Thyroid gland (tissue), 4 donors: ENCODE measurements at regions of chr3 and their contacts with region 1.

Region 1: GRCh38 chr3:141279077-141279967 is 47.7 kb downstream of the PXYLP1 start:
- DNase-seq: peak in 1 of 2 donors; percentile 19
- H3K4me3 ChIP-seq: no peak overlapping the region
- H3K27ac ChIP-seq: no peak overlapping the region
- H3K4me1 ChIP-seq: peaks cover 0 to 4% of the 10 kb centered on the region in 2 donors
- H3K27me3 ChIP-seq: no peaks in the 10 kb centered on the region
- CTCF ChIP-seq: peak in 5 of 6 experiments; percentile 41 to 76 (median 63)
- POLR2A ChIP-seq: no peak

Region 2: DNA sequence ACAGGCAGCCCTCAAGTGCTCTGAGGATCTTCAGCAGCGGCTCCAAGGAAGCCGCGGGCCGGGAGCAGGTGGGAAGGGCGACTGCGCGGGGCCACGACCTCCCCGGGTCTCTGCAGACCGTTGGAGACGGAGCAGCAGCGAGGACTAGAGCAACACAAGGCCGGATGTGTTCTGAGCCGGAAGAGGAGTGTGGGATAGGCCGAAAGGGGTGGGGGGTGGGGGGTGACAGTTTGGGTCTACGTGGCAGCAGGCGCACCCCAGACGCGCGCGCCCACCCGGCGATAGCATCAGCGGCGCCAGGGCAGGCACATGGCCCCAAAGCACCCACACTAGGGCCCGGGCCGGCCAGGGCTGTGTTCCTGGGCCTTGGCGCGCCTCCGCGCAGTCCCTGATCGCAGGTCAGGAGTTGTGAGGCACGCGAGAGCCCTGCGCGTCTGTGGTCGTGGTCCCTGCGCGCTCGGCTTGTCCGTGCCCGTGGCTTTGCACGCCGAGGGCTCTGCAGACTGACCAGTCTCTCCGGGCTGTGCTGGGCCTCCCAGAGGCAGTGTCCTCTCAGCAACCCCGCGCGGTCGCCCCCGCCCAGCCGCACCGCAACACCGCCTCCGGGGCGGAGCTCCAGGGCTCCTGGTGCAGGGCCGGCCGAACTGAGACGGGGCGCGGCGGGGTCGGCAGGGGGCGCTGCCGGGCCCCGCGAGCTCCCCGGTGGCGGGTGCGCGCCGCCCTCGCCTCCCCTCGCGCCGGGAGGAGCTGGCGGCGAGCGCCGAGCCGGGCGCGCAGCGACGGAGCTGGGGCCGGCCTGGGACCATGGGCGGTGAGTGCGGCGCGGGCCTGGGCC is 48.0 kb before region 1 on chr3 and contains the start of gene PXYLP1:
- intact Hi-C with region 1: loop called (anchors 5 kb)
- DNase-seq: peak; percentile 94 to 95
- H3K4me3 ChIP-seq: peak within 1 kb of the TSS; percentile 55 to 92 (median 63)
- H3K27ac ChIP-seq: peak within 1 kb of the TSS; percentile 61 to 85 (median 80)
- H3K4me1 ChIP-seq: peaks cover 0 to 11% of the 10 kb centered on the region in 2 donors
- H3K27me3 ChIP-seq: no peaks in the 10 kb centered on the region
- CTCF ChIP-seq: peak in 4 of 6 experiments; percentile 55 to 98 (median 96)
- POLR2A ChIP-seq: peak in 1 of 2 donors; percentile 83
- total RNA-seq, gene PXYLP1: 7.1 to 13.4 (median 10.3) TPM

Region 3: GRCh38 chr3:141392897-141393734 is 113.8 kb after region 1 on chr3:
- intact Hi-C with region 1: no loop called
- DNase-seq: no peak
- H3K4me3 ChIP-seq: no peak overlapping the region
- H3K27ac ChIP-seq: peak overlapping the region; percentile 80 to 93 (median 82)
- H3K4me1 ChIP-seq: peaks cover 42 to 53% of the 10 kb centered on the region in 2 donors
- H3K27me3 ChIP-seq: no peaks in the 10 kb centered on the region
- CTCF ChIP-seq: peak in 1 of 6 experiments; percentile 13
- POLR2A ChIP-seq: peak in 1 of 2 donors; percentile 3

Region 4: DNA sequence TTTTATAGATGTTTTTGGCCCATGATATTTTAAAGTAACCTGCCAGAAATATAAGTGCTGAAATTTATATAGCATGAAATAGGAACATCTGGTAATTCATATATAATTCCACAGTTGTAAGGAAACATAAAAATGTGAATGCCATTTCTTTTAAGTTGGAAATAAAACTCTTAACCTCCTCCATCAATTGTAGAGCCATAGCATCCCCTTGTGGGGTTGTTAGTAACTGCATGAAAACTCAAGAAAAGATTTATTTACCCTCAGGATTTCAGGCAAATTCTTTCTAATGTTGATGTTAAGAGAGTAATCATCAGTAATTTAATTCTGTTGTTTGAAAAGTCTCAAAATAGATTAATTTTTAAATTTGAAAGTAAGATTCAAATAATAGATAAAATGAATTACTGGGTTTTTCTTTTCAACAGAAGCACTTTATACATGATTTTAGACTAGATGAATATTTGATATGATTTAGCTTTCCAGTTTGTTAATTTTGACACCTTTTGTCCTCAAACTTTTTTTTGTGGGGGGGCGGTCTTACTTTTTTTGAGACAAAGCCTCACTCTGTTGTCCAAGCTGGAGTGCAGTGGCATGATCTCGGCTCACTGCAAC is 282.2 kb after region 1 on chr3:
- intact Hi-C with region 1: no loop called
- DNase-seq: peak in 1 of 2 donors; percentile 5
- H3K4me3 ChIP-seq: no peak overlapping the region
- H3K27ac ChIP-seq: no peak overlapping the region
- H3K4me1 ChIP-seq: no peaks in the 10 kb centered on the region
- H3K27me3 ChIP-seq: no peaks in the 10 kb centered on the region
- CTCF ChIP-seq: peak; percentile 77 to 99 (median 92)
- POLR2A ChIP-seq: no peak